ENCODE measurements at regions of chr11 and their contacts with region 1.

Region 1: DNA sequence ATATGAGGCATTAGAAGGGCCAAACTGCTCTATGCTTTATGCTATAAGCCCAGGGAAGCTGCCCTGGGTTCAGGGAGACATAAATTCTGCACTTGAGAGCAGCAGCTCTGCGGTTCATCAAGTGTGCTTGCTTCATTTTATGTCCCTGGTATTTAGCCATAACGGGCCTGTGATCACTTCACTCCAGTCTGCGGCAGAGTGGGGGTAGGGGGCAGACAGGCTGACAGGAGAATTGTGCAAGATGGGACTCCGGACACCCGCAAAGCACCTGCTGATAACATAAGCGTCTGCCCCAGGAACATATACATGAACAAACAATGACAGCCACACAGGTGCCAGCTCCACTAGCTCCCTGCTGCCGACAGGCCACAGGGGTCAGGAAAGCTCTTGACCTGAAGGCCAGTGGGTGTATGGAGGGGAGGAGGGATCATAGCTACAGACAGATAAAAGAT is 56.1 kb downstream of the SMCO4 start:
- DNase-seq: peak; percentile 97
- ATAC-seq: peak; percentile 99
- H3K4me3 ChIP-seq: peak overlapping the region in 1 of 3 experiments; percentile 15; a peak in 1 of 6 replicates
- H3K27ac ChIP-seq: peak overlapping the region; percentile 25
- H3K4me1 ChIP-seq: peaks cover 65% of the 10 kb centered on the region
- H3K27me3 ChIP-seq: no peaks in the 10 kb centered on the region
- CTCF ChIP-seq: peak; percentile 27; the same call in 1 of the 2 replicates
- EP300 ChIP-seq: peak; percentile 90 to 95; a peak in 3 of 4 replicates
- POLR2A ChIP-seq: no peak
- RAD21 ChIP-seq: peak; percentile 62; the same call in 1 of the 2 replicates

Region 2: DNA sequence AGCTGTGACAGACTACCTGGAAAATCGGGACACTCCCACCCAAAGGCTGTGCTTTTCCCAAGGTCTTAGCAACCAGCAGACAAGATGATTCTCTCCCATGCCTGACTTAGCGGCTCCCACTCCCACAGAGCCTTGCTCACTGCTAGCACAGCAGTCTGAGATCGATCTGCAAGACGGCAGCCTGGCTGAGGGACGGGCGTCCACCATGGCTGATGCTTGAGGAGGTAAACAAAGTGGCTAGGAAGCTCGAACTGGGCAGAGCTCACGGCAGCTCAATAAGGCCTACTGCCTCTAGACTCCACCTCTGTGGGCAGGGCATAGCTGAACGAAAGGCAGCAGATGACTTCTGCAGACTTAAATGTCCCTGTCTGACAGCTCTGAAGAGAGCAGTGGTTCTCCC is 28.8 kb before region 1 on chr11:
- CTCF ChIA-PET with region 1: no interaction called
- POLR2A ChIA-PET with region 1: no interaction called
- in situ Hi-C with region 1: no loop called
- intact Hi-C with region 1: loop called (anchors 2 kb)
- DNase-seq: no peak
- ATAC-seq: no peak
- H3K4me3 ChIP-seq: no peak overlapping the region
- H3K27ac ChIP-seq: no peak overlapping the region
- H3K4me1 ChIP-seq: no peaks in the 10 kb centered on the region
- H3K27me3 ChIP-seq: no peaks in the 10 kb centered on the region
- CTCF ChIP-seq: no peak
- EP300 ChIP-seq: no peak
- POLR2A ChIP-seq: no peak
- RAD21 ChIP-seq: no peak